ENCODE measurements at regions of chr2 and their contacts with region 1.

Region 1: DNA sequence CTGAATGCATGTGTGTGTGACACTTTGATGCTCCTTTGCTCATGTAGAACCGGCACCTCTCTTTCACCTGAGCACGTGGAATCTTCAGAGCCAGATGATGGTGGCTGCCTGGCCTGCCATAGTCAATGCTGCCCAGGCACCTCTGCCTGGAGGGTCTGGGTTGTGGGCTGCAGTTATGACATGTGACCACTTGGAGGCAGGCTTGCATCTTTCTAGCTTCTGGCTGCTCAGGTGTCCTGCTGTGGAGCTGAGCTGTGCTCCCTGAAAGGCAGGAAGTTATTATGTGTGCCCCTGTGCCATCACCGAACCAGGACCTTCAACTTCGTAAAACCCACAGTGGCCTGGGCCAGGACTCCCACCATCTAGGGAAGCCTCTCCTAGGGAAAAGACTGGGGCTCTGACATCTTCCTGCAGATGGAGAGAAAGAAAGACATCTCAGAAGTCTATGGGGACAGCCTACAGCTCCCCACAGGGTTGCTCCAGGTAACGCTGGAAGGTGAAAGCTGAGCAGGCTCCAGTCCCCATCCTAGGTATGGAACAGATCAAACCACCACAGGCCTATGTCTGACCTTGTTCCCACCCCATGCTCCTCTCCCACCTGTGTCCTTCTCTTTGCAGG is 30.2 kb downstream of the PSD4 start:
- DNase-seq: peak; percentile 81

Region 2: DNA sequence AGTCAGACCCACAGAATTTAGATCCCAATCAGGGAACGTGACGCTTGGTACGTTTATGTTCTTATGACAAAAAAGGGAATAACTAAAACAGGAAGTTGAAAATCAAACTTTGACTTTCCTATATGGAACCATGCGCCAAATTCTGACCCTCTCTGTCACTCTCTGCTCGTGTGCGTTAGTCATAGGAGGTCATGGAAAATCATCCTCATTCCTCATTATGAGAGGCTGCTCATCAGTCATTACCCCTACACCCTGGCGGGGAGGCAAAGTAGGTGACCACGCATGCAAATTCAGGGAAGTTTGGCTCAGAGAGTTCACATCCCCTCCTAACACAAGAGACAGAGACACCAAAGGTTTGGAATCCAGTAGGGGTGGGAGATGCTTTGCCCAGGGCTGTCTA is 120.7 kb before region 1 on chr2:
- intact Hi-C with region 1: loop called (anchors 2 kb)
- DNase-seq: no peak

Region 3: DNA sequence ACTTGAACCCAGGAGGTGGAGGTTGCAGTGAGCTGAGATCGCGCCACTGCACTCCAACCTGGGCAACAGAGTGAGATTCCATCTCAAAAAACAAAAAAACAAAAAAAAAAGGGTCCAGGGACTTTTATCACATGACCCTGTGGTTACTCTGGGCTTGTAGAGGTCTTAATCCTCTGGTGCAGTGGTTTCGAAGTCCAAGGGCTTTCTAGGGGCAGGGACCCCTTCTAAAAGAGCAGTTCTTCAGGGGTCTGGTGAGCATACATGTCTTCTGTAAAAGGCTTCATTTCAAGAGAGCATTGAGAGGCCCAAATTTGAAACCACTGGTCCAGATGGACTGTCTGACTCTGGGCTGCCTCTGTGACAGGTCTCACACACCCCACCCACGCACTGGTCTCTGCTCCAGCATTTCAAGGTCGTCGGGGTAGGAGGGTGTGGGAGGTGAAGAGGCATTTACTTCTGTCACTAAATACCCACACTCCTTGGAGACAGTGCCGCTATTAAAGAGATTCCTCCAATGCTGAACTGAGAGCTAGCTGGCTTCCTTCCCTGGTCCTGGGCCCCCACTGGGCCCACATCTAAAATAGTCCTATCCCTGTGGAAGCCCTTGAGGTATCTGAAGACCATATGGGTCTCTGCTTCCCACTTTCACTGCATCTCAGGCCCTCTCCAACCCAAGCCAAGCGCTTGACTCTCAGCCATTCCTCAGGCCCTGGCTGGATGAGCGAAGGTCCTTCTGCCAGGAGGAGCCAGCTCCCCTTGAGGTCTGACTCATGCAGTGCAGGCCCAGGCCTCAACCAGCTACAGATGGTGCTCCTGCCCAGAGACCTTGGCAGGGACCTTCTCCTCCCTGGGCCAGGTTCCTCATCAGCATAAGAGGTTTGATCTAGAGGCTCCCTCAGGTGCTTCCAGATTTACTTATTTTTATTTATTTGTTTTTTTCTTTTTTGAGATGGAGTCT is 29.9 kb after region 1 on chr2:
- intact Hi-C with region 1: no loop called
- DNase-seq: no peak

Region 4: DNA sequence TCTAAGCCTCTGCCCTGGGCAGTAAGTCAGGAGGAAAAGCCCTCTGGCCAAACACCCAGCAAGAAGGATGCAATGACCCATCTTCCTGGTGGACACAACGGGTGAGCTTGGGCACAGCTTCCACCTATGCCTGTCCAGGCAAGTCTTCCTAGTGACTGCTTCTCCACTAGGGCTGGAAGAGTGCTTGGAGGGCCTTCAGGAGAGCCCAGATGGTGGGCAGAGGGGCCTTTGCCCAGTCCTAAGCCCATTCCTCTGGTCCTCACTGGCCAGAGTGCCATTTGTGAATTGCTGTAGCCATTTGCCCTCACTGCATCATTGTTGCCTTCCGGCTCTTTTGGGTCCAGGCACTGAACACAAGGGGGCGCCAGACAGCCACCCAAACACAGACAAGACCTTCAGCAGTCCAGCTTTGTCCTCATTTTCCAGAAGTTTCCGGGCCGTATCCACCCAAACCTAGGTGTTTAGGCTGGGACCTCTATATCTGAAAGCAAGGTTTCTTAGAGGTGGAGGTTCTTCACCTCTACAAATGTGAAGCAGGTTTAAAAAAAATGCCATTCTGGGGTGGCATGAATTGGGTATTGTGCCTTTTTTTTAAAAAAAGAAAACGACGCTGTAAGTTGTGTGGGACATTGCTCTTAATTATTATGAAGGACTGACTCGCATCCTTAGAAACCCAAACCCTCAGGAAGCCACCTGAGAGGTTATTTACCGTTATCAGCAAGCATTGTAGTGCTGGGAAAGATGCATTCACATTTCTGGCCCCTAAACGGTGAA is 45.2 kb after region 1 on chr2:
- intact Hi-C with region 1: loop called (anchors 1 kb)
- DNase-seq: peak; percentile 91

Region 5: GRCh38 chr2:113260991-113261390 is 57.0 kb after region 1 on chr2:
- intact Hi-C with region 1: no loop called
- DNase-seq: no peak

Region 6: GRCh38 chr2:113324684-113325160 is 120.7 kb after region 1 on chr2:
- intact Hi-C with region 1: no loop called
- DNase-seq: no peak

Region 7: GRCh38 chr2:113370478-113371091 is 166.6 kb after region 1 on chr2:
- intact Hi-C with region 1: loop called (anchors 1 kb)
- DNase-seq: no peak

Region 8: DNA sequence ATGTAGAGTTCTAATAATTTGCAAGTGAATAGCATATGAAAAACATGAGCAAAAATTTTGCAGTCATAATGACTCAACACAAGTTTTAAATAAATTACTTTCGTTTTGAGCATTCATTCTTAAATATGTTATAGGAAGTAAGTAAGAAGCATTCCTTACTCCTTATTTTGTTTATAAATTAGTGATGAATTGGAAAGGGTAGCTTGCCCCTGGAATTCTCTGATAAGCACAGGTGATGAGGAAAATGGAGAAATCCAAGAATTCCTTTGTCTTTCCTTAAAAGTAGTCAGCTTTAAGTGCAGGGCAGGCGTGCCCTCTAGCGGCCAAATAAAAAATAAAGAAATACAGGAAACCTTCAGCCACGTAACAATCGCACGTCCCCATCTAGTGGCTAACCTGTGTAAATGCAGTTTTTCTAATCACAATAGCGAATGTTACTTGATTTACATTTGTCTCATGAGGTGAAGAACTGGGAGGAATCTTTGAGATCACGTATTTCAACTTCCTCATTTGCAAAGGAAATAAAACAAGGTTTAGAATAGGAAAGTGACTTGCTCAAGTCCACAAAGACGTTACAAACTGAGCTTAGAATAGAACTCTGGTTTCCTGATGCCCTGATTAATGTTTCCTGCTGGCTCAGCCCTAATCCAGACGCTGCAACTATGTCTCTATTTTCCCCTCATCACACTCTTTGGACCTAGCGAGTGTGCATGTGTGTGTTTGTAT is 186.3 kb after region 1 on chr2:
- intact Hi-C with region 1: loop called (anchors 5 kb)
- DNase-seq: no peak

Measured in cardiac septum (tissue), 1 donor.